Activated CD8-positive, alpha-beta T cell treated with anti-CD3 and anti-CD28 coated beads for 36 hours (primary cell): ENCODE measurements at regions of chr17 and their contacts with region 1.

Region 1: DNA sequence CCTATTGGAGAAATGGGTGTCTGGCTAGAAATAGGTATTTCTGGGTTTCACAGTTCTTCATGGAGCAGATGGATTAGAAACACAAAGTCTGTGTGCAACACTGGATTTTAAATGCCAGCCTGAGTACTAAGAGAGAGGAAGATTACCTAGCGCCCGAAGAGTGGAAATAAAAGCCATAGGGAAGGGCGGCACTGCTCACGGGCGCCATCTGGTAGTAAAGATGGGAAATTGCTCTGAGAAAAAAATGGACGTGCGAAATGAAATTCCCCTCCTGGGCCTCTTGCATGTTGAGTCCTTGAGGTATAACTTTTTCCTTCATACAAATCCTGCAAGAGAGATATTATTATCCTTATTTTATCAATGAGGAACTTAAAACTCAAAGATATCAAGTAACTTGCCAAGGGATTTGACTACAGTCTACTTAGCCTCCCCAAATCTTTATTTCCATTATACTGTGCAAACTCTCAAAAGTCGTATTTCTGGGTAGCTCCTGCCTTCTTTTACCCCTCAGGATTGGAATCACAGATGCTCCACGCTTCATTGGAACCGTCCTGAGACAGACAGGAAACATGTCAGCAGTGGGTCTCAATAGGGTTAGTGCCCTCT is 72.8 kb downstream of the MMD start:
- DNase-seq: peak; percentile 48
- ATAC-seq: no peak
- H3K4me3 Mint-ChIP-seq: no peak overlapping the region
- H3K27ac Mint-ChIP-seq: no peak overlapping the region
- H3K4me1 Mint-ChIP-seq: peaks cover 15% of the 10 kb centered on the region
- H3K27me3 Mint-ChIP-seq: peaks cover 4% of the 10 kb centered on the region
- CTCF ChIP-seq: peak; percentile 88

Region 2: DNA sequence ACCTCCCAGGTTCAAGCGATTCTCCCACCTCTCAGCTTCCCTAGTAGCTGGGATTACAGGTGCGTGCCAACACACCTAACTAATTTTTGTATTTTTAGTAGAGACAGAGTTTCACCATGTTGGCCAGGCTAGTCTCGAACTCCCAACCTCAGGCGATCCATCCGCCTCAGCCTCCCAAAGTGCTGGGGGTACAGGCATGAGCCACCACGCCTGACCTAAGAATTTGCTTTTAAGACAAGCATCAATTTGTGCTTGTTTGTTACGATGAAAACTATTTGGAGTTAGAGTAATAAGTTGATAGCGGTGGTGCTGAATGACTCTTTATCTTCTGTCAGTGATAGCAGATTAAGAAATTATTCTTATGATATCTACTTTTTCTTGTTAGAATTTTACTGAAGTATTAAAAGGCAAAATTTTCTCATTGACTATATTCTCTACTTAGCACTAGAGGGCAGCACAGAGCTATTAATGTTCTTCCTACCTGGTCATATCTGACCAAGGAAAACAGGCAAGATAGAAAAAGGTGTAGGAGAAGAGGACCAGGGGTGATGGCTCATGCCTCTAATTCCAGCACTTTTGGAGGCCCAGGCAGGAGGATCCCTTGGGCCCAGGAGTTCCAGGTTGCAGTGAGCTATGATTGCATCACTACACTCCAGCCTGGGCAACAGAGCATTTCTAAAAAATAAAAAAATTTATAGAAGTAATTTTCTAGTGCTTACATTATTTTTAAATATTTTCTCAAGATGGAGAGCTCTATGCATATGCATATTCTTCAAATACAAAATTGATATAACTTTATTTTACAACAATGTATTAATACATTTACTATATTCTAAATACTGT is 355.8 kb before region 1 on chr17:
- CTCF ChIA-PET with region 1: interaction called, 48 read pairs
- POLR2A ChIA-PET with region 1: no interaction called
- intact Hi-C with region 1: loop called (anchors 5 kb)
- DNase-seq: no peak
- ATAC-seq: no peak
- H3K4me3 Mint-ChIP-seq: no peak overlapping the region
- H3K27ac Mint-ChIP-seq: no peak overlapping the region
- H3K4me1 Mint-ChIP-seq: no peaks in the 10 kb centered on the region
- H3K27me3 Mint-ChIP-seq: no peaks in the 10 kb centered on the region
- CTCF ChIP-seq: peak; percentile 70

Region 3: GRCh38 chr17:55134486-55135157 is 214.2 kb before region 1 on chr17:
- CTCF ChIA-PET with region 1: no interaction called
- POLR2A ChIA-PET with region 1: no interaction called
- intact Hi-C with region 1: no loop called
- DNase-seq: no peak
- ATAC-seq: no peak
- H3K4me3 Mint-ChIP-seq: no peak overlapping the region
- H3K27ac Mint-ChIP-seq: no peak overlapping the region
- H3K4me1 Mint-ChIP-seq: no peaks in the 10 kb centered on the region
- H3K27me3 Mint-ChIP-seq: no peaks in the 10 kb centered on the region
- CTCF ChIP-seq: no peak

Region 4: GRCh38 chr17:55284001-55284884 is 64.6 kb before region 1 on chr17:
- CTCF ChIA-PET with region 1: no interaction called
- POLR2A ChIA-PET with region 1: no interaction called
- intact Hi-C with region 1: no loop called
- DNase-seq: no peak
- ATAC-seq: no peak
- H3K4me3 Mint-ChIP-seq: no peak overlapping the region
- H3K27ac Mint-ChIP-seq: no peak overlapping the region
- H3K4me1 Mint-ChIP-seq: peaks cover 2% of the 10 kb centered on the region
- H3K27me3 Mint-ChIP-seq: peaks cover 3% of the 10 kb centered on the region
- CTCF ChIP-seq: no peak

Region 5: DNA sequence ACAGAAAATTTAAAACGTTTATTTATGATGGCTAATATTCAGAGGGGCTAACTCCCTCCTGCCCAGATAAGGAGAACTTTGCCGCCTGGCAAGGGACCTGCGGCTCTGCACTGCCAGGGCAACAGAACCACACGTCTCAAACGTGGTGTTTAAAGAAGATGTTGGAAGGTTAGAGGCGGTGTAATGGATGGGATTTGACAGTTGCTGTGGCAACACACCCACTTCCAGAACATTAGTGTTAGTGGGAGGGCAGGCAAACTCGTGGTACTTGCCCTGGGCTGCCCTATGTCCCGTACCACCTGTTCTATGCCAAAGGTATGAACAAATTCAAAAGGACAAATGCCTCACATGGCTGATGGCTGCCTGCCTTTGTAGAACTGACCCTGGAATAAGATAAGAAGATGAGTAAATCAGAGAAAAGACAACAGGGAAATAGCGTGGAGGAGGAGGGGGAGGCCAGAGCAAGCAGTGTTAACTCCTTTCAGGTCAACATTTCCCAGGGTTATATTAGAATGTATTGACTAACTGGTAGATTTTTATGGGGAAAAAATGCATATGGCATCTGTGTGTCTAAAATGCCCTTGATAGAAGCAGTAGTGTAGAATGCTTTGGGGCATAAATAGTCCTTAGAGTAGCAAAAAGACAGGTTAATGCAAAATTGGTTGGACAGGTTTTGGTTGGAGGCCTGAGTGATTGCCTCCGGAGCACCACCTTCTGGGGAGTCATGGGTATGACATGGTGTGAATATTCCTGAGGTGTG is 53.3 kb before region 1 on chr17:
- CTCF ChIA-PET with region 1: interaction called, 12 read pairs
- POLR2A ChIA-PET with region 1: no interaction called
- intact Hi-C with region 1: loop called (anchors 5 kb)
- DNase-seq: peak; percentile 62
- ATAC-seq: peak; percentile 88
- H3K4me3 Mint-ChIP-seq: no peak overlapping the region
- H3K27ac Mint-ChIP-seq: no peak overlapping the region
- H3K4me1 Mint-ChIP-seq: no peaks in the 10 kb centered on the region
- H3K27me3 Mint-ChIP-seq: no peaks in the 10 kb centered on the region
- CTCF ChIP-seq: peak; percentile 86

Region 6: DNA sequence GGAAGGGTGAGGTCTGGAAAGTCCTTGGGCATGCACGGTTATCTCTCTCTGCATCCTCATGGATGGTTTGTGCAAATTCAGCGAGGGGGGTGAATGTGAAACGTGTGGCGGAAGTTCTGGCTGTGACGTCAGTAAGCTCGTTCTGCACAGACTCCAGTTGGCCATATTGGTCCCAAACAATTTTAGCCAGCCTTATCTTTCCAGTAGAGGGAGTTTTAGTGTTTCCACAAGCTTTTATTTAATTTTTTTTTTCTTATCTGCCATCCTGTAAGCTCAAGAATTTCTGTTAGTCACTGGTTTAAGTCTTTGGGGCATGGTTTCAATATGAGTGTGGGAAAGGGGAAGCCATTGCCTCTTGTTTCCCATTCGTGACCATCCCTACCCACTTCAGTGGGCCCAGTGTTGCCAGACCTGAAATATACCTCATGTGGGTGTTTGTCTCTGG is 45.1 kb before region 1 on chr17:
- CTCF ChIA-PET with region 1: interaction called, 8 read pairs
- POLR2A ChIA-PET with region 1: no interaction called
- intact Hi-C with region 1: loop called (anchors 5 kb)
- DNase-seq: no peak
- ATAC-seq: no peak
- H3K4me3 Mint-ChIP-seq: no peak overlapping the region
- H3K27ac Mint-ChIP-seq: no peak overlapping the region
- H3K4me1 Mint-ChIP-seq: no peaks in the 10 kb centered on the region
- H3K27me3 Mint-ChIP-seq: peaks cover 8% of the 10 kb centered on the region
- CTCF ChIP-seq: no peak

Region 7: GRCh38 chr17:55330336-55330981 is 18.4 kb before region 1 on chr17:
- CTCF ChIA-PET with region 1: interaction called, 11 read pairs
- POLR2A ChIA-PET with region 1: no interaction called
- intact Hi-C with region 1: no loop called
- DNase-seq: no peak
- ATAC-seq: no peak
- H3K4me3 Mint-ChIP-seq: no peak overlapping the region
- H3K27ac Mint-ChIP-seq: no peak overlapping the region
- H3K4me1 Mint-ChIP-seq: peaks cover 5% of the 10 kb centered on the region
- H3K27me3 Mint-ChIP-seq: peaks cover 12% of the 10 kb centered on the region
- CTCF ChIP-seq: no peak